Activated T-helper 1 cell treated with anti-CD3 and anti-CD28 coated beads, Interleukin-12 subunit alpha, Interleukin-12 subunit beta, Interleukin-2, Interleukin-4 antibody, amounts not matched to agents 30 ng/mL and 10 ng/mL and 1 ng/mL, durations not matched to agents 14 hours and 24 hours and 36 hours (primary cell): ENCODE measurements at regions of chr6 and their contacts with region 1.

Region 1: GRCh38 chr6:153023977-153024708 is 21.6 kb upstream of the MTRF1L start:
- DNase-seq: peak; percentile 28
- H3K4me3 Mint-ChIP-seq: no peak overlapping the region
- H3K27ac Mint-ChIP-seq: no peak overlapping the region
- H3K4me1 Mint-ChIP-seq: peaks cover 7% of the 10 kb centered on the region
- H3K27me3 Mint-ChIP-seq: peaks cover 40% of the 10 kb centered on the region

Region 2: DNA sequence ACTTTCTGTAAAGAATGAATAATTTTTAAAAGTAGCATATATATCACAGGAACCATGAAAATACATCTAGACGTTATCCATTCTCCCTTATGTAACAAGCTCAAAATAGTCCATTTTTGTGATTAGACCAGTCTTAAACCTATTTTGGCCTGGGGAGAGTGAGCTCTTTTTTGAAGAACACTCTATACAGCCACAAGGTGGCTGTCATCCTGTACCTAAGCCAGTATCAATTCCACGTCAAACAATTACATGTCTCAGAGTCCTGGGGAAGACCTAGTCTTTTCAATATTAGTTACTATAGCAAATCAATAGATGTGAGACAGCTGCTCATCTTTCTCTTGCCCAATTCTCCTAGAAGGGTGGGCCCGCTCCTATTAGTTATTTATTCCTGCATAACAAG is 69.7 kb before region 1 on chr6:
- intact Hi-C with region 1: loop called (anchors 1 kb)
- DNase-seq: no peak
- H3K4me3 Mint-ChIP-seq: no peak overlapping the region
- H3K27ac Mint-ChIP-seq: no peak overlapping the region
- H3K4me1 Mint-ChIP-seq: no peaks in the 10 kb centered on the region
- H3K27me3 Mint-ChIP-seq: peaks cover 5% of the 10 kb centered on the region

Region 3: GRCh38 chr6:152982768-152983636 is 41.1 kb before region 1 on chr6 and contains the start of gene FBXO5:
- intact Hi-C with region 1: loop called (anchors 2 kb)
- DNase-seq: peak; percentile 98
- H3K4me3 Mint-ChIP-seq: peak within 1 kb of the TSS; percentile 96
- H3K27ac Mint-ChIP-seq: peak within 1 kb of the TSS; percentile 100
- H3K4me1 Mint-ChIP-seq: peaks cover 53% of the 10 kb centered on the region
- H3K27me3 Mint-ChIP-seq: no peaks in the 10 kb centered on the region
- total RNA-seq, gene FBXO5: 29.4 and 33.2 TPM in 2 replicates